ENCODE measurements at regions of chr11 and their contacts with region 1.

Region 1: GRCh38 chr11:112280268-112281126 is 19.8 kb upstream of the PLET1 start:
- DNase-seq: peak in 1 of 2 donors; percentile 73
- ATAC-seq: peak; percentile 94
- H3K4me3 ChIP-seq: peak overlapping the region; percentile 48 to 66
- H3K27ac ChIP-seq: peak overlapping the region in 1 of 2 donors; percentile 62
- H3K4me1 ChIP-seq: no peaks in the 10 kb centered on the region
- H3K27me3 ChIP-seq: no peaks in the 10 kb centered on the region

Region 2: GRCh38 chr11:112113539-112114457 is 166.7 kb before region 1 on chr11:
- intact Hi-C with region 1: loop called (anchors 10 kb)
- DNase-seq: no peak
- ATAC-seq: peak; percentile 75
- H3K4me3 ChIP-seq: no peak overlapping the region
- H3K27ac ChIP-seq: no peak overlapping the region
- H3K4me1 ChIP-seq: no peaks in the 10 kb centered on the region
- H3K27me3 ChIP-seq: no peaks in the 10 kb centered on the region

Region 3: GRCh38 chr11:112219476-112220232 is 60.8 kb before region 1 on chr11:
- intact Hi-C with region 1: loop called (anchors 1 to 2 kb)
- DNase-seq: no peak
- ATAC-seq: peak; percentile 93
- H3K4me3 ChIP-seq: no peak overlapping the region
- H3K27ac ChIP-seq: no peak overlapping the region
- H3K4me1 ChIP-seq: peaks cover 0 to 2% of the 10 kb centered on the region in 2 donors
- H3K27me3 ChIP-seq: no peaks in the 10 kb centered on the region

Region 4: DNA sequence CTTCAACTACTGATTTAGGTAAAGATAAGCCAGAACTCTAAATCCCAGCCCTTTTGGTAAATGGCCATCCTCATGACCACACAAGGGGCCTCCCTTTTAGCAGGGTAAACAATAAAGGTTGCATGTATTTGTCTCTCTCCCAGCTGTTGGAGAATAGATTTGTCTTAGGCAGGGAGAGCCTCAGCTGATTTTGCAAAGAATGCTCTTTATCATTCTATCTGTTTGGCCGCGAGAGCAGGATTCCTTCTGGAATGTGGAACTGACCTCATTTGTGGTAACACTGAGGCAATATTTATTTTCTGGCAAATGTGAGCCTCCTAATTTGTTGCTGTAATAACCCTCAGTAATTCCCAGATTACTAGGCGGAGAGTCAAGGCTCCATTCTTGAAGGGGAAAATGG is 39.0 kb before region 1 on chr11:
- intact Hi-C with region 1: no loop called
- DNase-seq: no peak
- ATAC-seq: peak; percentile 76
- H3K4me3 ChIP-seq: no peak overlapping the region
- H3K27ac ChIP-seq: no peak overlapping the region
- H3K4me1 ChIP-seq: no peaks in the 10 kb centered on the region
- H3K27me3 ChIP-seq: no peaks in the 10 kb centered on the region

Region 5: DNA sequence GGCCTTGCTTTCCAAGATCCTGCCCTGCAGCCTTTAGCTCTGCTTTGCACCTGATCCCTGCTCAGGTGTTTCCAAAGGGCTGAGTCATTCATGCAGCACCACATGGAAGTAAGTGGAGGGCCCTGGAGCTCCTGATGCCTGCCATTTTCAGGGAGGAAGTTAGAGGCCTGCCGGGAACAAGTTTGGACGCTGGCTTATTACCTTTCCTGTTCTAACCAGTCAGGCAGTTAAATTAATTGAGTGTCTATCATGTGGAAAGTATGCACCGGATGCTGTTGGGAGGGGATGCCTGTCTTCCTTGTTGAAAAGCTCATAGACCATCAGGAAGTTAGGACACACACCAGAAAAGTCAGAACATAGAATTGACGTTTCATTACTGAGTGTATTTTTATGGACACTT is 53.9 kb after region 1 on chr11:
- intact Hi-C with region 1: no loop called
- DNase-seq: no peak
- ATAC-seq: no peak
- H3K4me3 ChIP-seq: no peak overlapping the region
- H3K27ac ChIP-seq: no peak overlapping the region
- H3K4me1 ChIP-seq: no peaks in the 10 kb centered on the region
- H3K27me3 ChIP-seq: no peaks in the 10 kb centered on the region

Region 6: DNA sequence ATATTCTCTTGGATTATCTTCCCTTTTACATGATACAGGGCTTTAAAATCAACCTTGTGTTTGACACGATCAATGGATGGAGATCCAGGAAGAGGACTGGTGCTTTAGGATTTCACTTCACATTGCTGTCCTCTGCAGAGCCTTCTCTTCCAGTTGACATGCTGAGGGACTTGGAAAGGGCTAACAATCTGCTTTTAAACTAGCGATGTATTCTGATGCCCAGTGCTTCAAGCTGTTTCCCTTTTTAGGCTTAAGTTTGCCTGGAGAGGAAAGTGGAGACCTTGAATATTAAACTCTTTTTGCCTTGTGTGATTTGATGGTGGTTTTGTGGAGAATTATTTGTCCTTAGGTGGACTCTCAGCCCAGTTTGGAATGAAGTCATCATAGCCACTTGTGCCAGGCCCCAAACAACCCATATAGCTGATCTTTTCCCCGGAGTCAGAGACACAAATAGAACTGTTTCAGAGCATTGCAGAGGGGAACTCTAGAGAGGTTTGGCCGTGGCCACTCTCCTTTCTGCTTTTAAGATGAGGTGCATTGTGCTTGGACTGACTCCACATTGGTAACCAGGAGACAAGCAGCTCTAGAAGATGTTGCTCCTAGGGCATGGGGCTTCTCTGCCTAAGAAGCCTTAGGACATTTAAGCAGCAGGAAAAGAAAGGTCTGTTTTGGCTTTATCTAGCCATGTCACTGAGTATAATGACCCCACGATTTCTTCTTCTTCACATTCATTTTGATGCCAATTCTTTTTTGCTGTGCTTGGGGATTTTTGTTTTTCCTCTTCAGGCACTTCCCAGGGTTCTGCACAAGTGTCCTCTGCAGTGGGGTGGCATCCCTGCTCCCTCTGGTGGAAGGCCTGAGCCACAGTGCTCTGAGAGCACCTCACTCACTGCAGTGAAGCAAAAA is 833.6 kb after region 1 on chr11:
- intact Hi-C with region 1: loop called in 1 of 2 experiments (anchors 10 kb)
- DNase-seq: peak; percentile 65 to 77
- ATAC-seq: peak; percentile 89
- H3K4me3 ChIP-seq: peak overlapping the region in 1 of 2 donors; percentile 5
- H3K27ac ChIP-seq: peak overlapping the region; percentile 71 to 93
- H3K4me1 ChIP-seq: peaks cover 4 to 7% of the 10 kb centered on the region in 2 donors
- H3K27me3 ChIP-seq: no peaks in the 10 kb centered on the region

Region 7: GRCh38 chr11:113289431-113290187 is 1009.1 kb after region 1 on chr11:
- intact Hi-C with region 1: loop called (anchors 5 to 10 kb)
- DNase-seq: peak; percentile 71 to 85
- ATAC-seq: peak; percentile 72
- H3K4me3 ChIP-seq: no peak overlapping the region
- H3K27ac ChIP-seq: no peak overlapping the region
- H3K4me1 ChIP-seq: no peaks in the 10 kb centered on the region
- H3K27me3 ChIP-seq: no peaks in the 10 kb centered on the region

Measured in aorta (tissue), 5 donors.